ENCODE measurements at regions of chr14 and their contacts with region 1.

Region 1: DNA sequence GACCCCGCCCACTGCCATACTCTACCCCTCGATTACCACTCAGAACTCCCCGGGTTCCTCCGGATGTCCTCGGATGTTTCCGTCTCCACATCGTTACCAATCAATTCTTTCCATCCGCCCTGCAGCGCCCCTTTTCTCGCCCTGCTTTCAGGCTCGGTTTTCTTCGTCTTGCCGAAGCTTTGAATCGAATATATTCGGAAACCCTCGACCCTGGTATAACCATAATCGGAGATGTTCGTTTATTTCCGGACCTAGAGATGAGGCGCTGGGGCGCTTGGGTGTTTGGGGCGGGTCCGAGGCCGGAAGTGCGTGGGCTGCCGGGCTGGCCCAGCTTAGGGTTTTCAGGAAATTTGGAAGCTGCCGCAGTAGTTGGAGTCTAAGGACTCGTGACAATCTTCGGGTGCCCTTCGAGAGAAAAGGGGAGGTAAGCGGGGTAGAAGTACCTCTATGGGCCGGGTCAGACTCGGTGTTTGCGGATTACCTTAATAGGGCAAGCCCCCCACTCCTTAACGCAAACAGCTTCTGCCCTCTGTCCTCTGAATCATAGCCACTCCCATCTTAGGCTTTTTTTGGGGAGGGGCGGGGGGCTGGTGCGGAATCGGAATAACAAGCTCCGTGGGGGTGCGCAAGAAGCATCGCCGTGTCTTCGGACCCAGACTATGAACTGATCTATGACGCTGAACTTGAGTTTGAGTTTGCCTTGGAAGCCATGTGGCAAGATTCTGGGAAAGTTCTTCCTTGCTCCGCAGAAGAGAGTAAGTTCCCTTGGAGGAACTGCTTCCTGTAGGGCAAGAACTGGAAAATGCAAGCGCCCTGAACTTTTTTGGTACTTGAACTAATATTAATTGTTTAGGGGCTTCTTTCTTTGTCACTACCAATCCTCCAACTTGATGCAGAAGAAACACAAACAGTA is at the start of gene C14orf119:
- DNase-seq: peak; percentile 99
- H3K4me3 Mint-ChIP-seq: no peak within 1 kb of the TSS
- H3K27ac Mint-ChIP-seq: no peak within 1 kb of the TSS
- H3K4me1 Mint-ChIP-seq: peaks cover 15% of the 10 kb centered on the region
- H3K27me3 Mint-ChIP-seq: no peaks in the 10 kb centered on the region
- total RNA-seq, gene C14orf119: 49.7 and 55.6 TPM in 2 replicates

Region 2: GRCh38 chr14:22766456-22767322 is 328.8 kb before region 1 on chr14 and contains the start of gene OXA1L:
- intact Hi-C with region 1: loop called (anchors 2 kb)
- DNase-seq: peak; percentile 94
- H3K4me3 Mint-ChIP-seq: peak within 1 kb of the TSS; percentile 94
- H3K27ac Mint-ChIP-seq: peak within 1 kb of the TSS; percentile 96
- H3K4me1 Mint-ChIP-seq: peaks cover 22% of the 10 kb centered on the region
- H3K27me3 Mint-ChIP-seq: no peaks in the 10 kb centered on the region
- total RNA-seq, gene OXA1L: 125 and 127 TPM in 2 replicates

Region 3: GRCh38 chr14:22929104-22929847 is 166.2 kb before region 1 on chr14 and contains the start of gene PRMT5:
- intact Hi-C with region 1: loop called (anchors 1 kb)
- DNase-seq: peak; percentile 95
- H3K4me3 Mint-ChIP-seq: no peak within 1 kb of the TSS
- H3K27ac Mint-ChIP-seq: no peak within 1 kb of the TSS
- H3K4me1 Mint-ChIP-seq: peaks cover 32% of the 10 kb centered on the region
- H3K27me3 Mint-ChIP-seq: no peaks in the 10 kb centered on the region
- total RNA-seq, gene PRMT5: 174 and 180 TPM in 2 replicates

Region 4: DNA sequence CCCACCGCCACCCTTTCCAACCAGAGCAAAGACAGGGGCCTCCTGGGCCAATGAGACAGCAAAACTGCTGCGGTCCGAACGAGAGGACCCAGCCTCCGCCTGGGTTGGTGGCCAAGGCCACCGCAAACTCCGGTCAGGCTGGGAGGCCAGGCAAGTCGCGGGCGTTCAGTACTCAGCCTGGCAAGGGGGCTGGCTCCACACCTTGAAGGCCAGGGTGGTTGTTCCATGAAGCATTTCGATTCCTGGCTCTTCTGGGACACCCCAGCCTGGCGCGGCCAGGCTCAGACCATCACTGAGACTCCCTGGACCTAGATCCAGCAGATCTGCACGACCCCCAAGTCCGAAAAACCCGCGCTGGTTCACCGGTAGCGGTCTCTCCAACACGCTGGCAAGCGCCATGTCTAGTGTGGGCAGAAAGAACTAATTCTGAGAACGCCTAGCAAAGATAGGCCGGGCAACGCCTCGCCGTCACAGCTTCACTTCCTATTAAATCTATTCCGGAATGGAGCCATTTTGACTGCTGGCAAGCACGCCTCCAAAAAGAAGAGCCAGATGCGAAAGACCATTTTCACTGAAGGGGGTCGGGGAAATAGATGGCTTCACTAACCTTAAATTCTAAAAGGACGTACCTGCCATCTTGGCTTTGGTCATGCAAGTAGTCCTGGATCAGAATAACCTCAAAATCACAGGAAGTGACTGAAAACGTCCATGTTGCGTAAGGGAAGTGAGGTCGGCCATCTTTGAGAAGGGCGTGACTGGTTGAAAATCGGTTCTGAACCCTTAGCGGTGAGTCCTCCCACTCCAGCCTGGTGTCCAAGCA is 60.8 kb before region 1 on chr14 and contains the start of gene PSMB5:
- intact Hi-C with region 1: loop called (anchors 1 kb)
- DNase-seq: peak; percentile 85
- H3K4me3 Mint-ChIP-seq: peak within 1 kb of the TSS; percentile 98
- H3K27ac Mint-ChIP-seq: peak within 1 kb of the TSS; percentile 98
- H3K4me1 Mint-ChIP-seq: peaks cover 28% of the 10 kb centered on the region
- H3K27me3 Mint-ChIP-seq: peaks cover 2% of the 10 kb centered on the region
- total RNA-seq, gene PSMB5: 144 and 148 TPM in 2 replicates

Region 5: DNA sequence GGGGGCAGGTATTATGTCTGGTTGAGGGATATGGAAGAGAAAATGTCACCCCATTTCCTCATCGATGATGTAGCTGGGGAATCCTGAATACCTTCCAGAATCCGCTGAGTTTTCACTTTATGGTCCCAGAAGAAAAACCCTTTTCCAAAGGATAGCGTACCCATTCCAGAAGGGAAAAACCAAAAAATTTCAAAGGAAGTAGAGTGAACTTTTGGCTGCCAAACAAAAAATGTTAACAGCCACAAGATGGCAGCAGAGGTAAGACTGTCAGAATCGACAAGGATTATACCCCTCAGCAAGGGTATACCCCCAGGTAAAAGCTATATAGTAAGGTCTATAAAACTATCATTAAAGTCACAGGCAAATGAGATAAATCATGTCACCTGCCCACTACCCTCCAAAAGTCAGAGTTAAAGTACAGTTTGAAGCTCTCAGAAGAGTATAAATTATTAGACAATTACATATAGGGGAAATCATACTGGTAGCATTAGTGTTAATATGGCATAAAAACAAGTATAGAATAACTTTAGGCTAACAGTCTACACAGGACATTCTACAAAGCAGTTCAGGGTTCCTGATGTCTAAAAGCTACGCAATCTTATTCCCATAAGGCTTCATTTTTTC is 18.6 kb before region 1 on chr14:
- intact Hi-C with region 1: no loop called
- DNase-seq: no peak
- H3K4me3 Mint-ChIP-seq: no peak overlapping the region
- H3K27ac Mint-ChIP-seq: no peak overlapping the region
- H3K4me1 Mint-ChIP-seq: peaks cover 11% of the 10 kb centered on the region
- H3K27me3 Mint-ChIP-seq: no peaks in the 10 kb centered on the region

Region 6: DNA sequence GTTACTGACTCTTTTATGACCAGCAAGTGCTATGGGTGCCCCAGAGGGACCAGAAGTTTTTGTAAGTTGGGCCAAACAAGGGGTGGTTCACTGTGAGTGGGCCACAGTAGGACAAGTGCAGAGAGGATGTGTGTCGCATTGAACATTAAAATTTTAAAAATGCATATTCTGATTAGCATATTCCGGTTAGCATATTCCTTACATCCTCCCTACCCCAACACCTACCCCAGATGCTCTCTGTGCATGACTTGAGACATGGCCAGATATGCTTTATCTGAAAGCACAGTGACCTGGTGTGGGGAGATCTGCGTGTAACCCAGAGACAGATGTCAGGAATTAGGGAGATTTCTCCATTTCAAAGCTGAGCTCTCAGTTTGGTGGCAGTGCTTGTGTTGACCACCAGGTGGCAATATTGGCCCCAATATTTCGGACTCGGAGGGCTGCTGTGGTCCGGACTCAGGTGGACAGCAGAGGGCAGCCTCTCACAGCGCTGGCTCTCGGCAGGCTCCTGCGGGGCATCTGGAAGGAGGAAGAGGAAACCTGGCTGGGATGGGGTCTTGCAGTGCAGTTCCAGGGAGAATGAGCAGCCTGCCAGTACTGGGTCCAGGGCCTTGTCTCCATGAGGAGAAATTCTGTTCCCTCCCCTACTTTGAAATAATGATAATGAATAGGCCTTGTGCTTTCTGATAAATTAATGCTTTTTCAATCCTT is 25.2 kb after region 1 on chr14:
- intact Hi-C with region 1: loop called (anchors 1 kb)
- DNase-seq: peak; percentile 73
- H3K4me3 Mint-ChIP-seq: peak overlapping the region; percentile 38
- H3K27ac Mint-ChIP-seq: peak overlapping the region; percentile 90
- H3K4me1 Mint-ChIP-seq: peaks cover 31% of the 10 kb centered on the region
- H3K27me3 Mint-ChIP-seq: peaks cover 10% of the 10 kb centered on the region

Region 7: GRCh38 chr14:23217032-23218020 is 121.9 kb after region 1 on chr14:
- intact Hi-C with region 1: no loop called
- DNase-seq: no peak
- H3K4me3 Mint-ChIP-seq: no peak overlapping the region
- H3K27ac Mint-ChIP-seq: no peak overlapping the region
- H3K4me1 Mint-ChIP-seq: no peaks in the 10 kb centered on the region
- H3K27me3 Mint-ChIP-seq: peaks cover 16% of the 10 kb centered on the region

Region 8: GRCh38 chr14:23320774-23321571 is 225.5 kb after region 1 on chr14 and contains the start of gene PABPN1:
- intact Hi-C with region 1: loop called (anchors 1 kb)
- DNase-seq: peak; percentile 98
- H3K4me3 Mint-ChIP-seq: peak within 1 kb of the TSS; percentile 97
- H3K27ac Mint-ChIP-seq: peak within 1 kb of the TSS; percentile 97
- H3K4me1 Mint-ChIP-seq: peaks cover 30% of the 10 kb centered on the region
- H3K27me3 Mint-ChIP-seq: no peaks in the 10 kb centered on the region
- total RNA-seq, gene PABPN1: 252 and 266 TPM in 2 replicates

Measured in activated T-helper 1 cell treated with anti-CD3 and anti-CD28 coated beads, Interleukin-12 subunit alpha, Interleukin-12 subunit beta, Interleukin-2, Interleukin-4 antibody, amounts not matched to agents 30 ng/mL and 10 ng/mL and 1 ng/mL, durations not matched to agents 14 hours and 24 hours and 36 hours (primary cell).